Heart right ventricle (tissue), 16 donors: ENCODE measurements at regions of chr2 and their contacts with region 1.

Region 1: GRCh38 chr2:127324635-127325034 is 30.7 kb upstream of the ERCC3 start:
- DNase-seq: peak in 1 of 2 donors; percentile 9
- ATAC-seq: peak in 1 of 8 donors; percentile 27
- H3K4me3 ChIP-seq: no peak overlapping the region
- H3K27ac ChIP-seq: no peak overlapping the region
- H3K4me1 ChIP-seq: no peaks in the 10 kb centered on the region
- H3K27me3 ChIP-seq: no peaks in the 10 kb centered on the region
- CTCF ChIP-seq: peak in 8 of 9 donors; percentile 25 to 70 (median 60)

Region 2: GRCh38 chr2:127408004-127408806 is 83.6 kb after region 1 on chr2:
- intact Hi-C with region 1: loop called in 2 of 10 experiments (anchors 5 to 10 kb)
- DNase-seq: peak; percentile 91 to 94
- ATAC-seq: peak; percentile 88 to 96 (median 94)
- H3K4me3 ChIP-seq: peak overlapping the region; percentile 28 to 72 (median 64)
- H3K27ac ChIP-seq: peak overlapping the region; percentile 63 to 97 (median 92)
- H3K4me1 ChIP-seq: peaks cover 0 to 69% (median 35%) of the 10 kb centered on the region in 9 donors
- H3K27me3 ChIP-seq: no peaks in the 10 kb centered on the region
- CTCF ChIP-seq: peak in 2 of 9 donors; percentile 12 to 15

Region 3: DNA sequence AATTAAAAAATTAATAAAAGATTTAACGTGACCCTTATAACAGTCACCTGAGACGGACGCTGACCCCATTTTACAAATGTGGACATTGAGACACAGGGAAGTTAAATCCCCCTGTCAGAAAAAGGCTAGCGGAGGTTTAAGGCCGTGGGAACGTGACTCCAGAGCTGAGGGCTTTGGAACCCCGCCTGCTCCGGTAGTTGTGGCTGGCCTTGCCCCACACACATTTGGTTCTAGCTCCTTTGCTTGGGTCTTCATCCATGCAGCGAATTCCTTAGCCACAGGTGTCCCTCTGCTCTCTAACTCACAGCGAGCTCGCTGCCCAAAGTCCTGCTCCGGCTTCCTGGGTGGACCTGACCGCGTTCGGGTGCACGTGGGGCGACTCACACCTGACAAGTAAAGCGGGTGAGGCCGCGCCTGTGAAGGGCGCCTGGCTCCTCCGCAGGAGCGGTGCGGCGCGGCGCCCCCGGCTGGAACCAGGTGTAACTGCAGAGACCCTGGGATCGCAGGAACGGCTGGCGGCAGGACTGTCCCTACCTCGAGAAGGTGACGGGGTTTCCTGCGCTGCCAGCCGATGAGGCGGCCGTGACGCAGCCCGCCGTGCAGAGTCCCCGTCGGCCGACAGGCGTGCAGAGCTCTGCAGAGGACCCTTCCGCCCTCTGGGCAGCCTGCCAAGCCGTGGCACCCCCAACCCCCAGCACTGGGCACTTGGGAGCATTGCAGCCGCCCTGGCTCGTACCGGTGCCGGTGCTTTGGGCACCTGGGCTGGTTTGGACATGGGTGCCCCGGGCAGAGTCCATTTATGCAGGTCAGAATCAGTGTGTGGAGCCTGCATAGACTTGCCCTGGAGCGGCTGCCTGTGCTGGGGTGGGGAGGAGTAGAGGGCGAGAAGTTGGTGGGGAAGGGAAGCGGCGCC is 91.2 kb after region 1 on chr2:
- intact Hi-C with region 1: loop called in 3 of 10 experiments (anchors 2 to 10 kb)
- DNase-seq: peak; percentile 30 to 62
- ATAC-seq: peak; percentile 53 to 83 (median 76)
- H3K4me3 ChIP-seq: peak overlapping the region in 9 of 10 donors; percentile 40 to 62 (median 54)
- H3K27ac ChIP-seq: peak overlapping the region in 1 of 10 donors; percentile 2
- H3K4me1 ChIP-seq: peaks cover 8 to 47% (median 20%) of the 10 kb centered on the region in 9 donors
- H3K27me3 ChIP-seq: peaks cover 0 to 24% (median 16%) of the 10 kb centered on the region in 7 donors
- CTCF ChIP-seq: peak; percentile 34 to 73 (median 61)

Region 4: DNA sequence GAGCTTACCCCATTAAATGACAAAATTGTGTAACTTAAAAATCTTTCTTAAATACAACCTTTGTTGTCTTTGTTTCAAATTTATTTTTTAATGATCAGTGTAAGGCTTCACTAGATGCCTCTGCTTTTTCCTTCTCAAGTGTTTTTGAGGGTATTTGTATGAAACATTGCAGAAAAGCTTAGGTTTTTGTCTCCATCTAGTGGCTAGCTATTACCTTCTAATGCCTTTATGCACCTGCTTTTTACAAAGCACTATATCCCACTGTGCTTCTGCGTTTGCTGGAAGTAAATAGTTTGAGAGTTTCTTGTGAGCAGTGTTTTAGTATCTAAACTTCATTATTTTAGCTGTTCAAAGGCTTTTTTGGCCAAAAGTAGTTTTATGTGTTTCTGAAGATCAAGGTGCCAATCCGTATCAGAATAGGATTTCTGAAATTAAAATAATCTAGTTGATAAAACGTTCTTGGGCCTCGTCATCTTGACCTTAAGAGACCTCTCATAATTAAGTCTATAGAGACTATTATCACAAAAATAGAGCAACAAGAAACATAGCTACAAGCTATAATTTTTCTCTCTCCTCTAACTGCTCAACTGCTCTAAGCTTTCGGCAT is 154.7 kb after region 1 on chr2:
- intact Hi-C with region 1: loop called (anchors 2 to 10 kb)
- DNase-seq: no peak
- ATAC-seq: peak in 6 of 8 donors; percentile 43 to 65 (median 55)
- H3K4me3 ChIP-seq: no peak overlapping the region
- H3K27ac ChIP-seq: no peak overlapping the region
- H3K4me1 ChIP-seq: no peaks in the 10 kb centered on the region
- H3K27me3 ChIP-seq: no peaks in the 10 kb centered on the region
- CTCF ChIP-seq: peak; percentile 35 to 78 (median 66)

Region 5: DNA sequence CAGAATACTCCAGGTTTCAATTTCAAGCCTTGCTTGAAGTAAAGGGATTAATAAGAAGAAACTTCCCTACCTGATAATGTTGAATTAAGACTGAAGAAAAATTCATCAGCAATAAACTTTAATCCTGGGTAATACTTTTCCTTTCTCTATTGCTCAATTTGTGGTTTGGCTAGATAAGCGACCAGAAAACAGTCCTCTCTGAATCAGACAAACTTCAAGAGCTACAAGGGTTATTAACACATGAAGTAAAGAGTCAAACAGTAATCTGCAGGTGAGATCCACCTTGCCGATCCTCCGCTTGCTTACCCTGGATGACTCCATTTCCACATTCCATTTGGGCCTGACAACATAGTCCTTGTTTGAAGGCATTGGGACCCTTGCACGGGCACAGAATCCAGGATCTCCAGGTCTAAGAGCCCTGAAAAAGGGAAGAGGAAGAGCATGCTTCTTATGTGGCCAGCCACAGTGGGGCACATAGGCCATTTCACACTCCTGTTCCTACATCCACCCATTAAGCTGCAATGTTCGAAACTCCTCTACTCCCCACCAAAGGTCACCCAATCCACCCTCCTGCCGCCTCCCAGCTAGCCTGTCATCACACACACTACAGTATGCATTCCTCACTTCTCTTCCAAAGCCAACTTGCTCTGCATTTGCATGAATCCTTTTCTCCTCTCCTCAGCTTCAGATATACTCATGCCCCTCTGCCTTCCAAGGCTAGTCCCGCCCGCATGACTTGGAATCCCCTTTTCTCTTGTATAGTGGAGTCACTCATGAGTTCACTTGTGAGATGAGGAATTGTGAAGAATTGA is 161.8 kb after region 1 on chr2:
- intact Hi-C with region 1: loop called in 1 of 10 experiments (anchors 10 kb)
- DNase-seq: no peak
- ATAC-seq: no peak
- H3K4me3 ChIP-seq: no peak overlapping the region
- H3K27ac ChIP-seq: no peak overlapping the region
- H3K4me1 ChIP-seq: peaks cover 0 to 16% (median 0%) of the 10 kb centered on the region in 9 donors
- H3K27me3 ChIP-seq: no peaks in the 10 kb centered on the region
- CTCF ChIP-seq: no peak

Region 6: DNA sequence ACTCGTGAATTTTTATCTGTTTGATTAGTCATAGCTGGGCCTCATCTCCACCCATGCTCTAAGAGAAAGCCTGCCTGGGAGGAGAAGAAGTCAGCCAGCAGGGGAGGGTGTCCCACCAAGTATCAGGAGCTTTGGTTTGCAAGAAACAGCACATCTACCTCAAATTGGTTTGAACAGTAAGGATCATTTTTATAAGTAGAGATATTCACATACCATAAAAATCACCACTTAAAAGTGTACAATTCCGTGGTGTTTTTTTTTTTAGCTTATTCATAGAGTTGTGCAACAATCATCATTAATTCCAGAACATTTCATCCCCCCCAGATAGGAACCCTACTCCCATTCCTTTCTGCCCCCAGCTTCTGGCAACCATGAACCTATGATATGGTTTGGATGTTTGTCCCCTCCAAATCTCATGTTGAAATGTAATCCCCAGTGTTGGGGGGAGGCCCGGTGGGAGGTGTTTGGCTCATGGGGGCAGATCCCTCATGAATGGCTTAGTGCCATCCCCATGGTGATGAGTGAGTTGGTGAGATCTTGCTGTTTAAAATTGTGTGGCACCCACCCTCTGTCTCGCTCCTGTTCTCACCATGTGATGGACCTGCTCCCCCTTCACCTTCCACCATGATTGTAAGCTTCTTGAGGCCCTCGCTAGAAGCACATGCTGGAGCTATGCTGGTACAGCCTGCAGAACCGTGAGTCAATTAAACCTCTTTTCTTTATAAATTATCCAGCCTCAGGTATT is 1030.3 kb after region 1 on chr2:
- intact Hi-C with region 1: no loop called
- DNase-seq: no peak
- ATAC-seq: no peak
- H3K4me3 ChIP-seq: no peak overlapping the region
- H3K27ac ChIP-seq: no peak overlapping the region
- H3K4me1 ChIP-seq: no peaks in the 10 kb centered on the region
- H3K27me3 ChIP-seq: no peaks in the 10 kb centered on the region
- CTCF ChIP-seq: no peak